ENCODE measurements at regions of chr19 and their contacts with region 1.

Region 1: GRCh38 chr19:17859533-17860330 is at the start of gene RPL18A:
- DNase-seq: peak; percentile 91 to 99 (median 98)
- ATAC-seq: peak; percentile 94 to 95
- H3K4me3 Mint-ChIP-seq: peak within 1 kb of the TSS; percentile 91 to 100 (median 99)
- H3K27ac Mint-ChIP-seq: peak within 1 kb of the TSS; percentile 95 to 100 (median 98)
- H3K4me1 Mint-ChIP-seq: peaks cover 19 to 42% (median 39%) of the 10 kb centered on the region in 4 donors
- H3K27me3 Mint-ChIP-seq: peaks cover 0 to 1% (median 0%) of the 10 kb centered on the region in 5 donors
- polyA plus RNA-seq, gene RPL18A: 3,790 to 4,859 (median 4,546) TPM

Region 2: DNA sequence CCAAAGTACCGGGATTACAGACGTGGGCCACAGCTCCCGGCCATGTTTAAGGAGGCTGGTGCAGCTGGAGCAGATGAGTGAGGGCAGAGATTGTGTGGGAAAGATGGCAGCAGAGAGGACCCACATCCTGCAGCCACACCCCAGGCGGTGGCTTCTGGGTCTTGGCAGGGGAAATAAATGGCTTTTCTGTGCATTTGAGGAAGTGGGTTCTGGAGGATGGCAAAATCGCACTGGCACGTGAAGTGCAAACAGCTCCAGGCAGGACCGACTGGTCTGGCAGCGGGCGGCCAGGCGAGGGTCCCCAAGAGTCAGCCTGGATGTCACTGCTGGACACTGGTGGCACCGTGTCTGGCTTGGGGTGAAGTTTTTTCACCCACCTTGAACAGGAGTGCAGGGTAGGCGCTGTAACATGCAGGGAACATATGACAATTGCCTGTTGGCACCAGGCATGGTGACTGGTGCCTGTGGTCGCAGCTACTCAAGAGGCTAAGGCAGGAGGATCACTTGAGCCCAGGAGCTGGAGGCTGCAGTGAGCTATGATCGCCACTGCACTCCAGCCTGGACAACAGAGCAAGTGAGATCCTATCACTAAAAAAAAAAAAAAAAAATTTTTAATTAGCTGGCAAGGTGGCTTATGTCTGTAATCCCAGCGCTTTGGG is 56.3 kb before region 1 on chr19:
- POLR2A ChIA-PET with region 1: interaction called, 21 read pairs
- DNase-seq: peak in 5 of 10 donors; percentile 19 to 64 (median 35)
- ATAC-seq: peak; percentile 70 to 82
- H3K4me3 Mint-ChIP-seq: peak overlapping the region; percentile 74 to 89 (median 78)
- H3K27ac Mint-ChIP-seq: peak overlapping the region; percentile 78 to 95 (median 90)
- H3K4me1 Mint-ChIP-seq: peaks cover 23 to 55% (median 44%) of the 10 kb centered on the region in 4 donors
- H3K27me3 Mint-ChIP-seq: no peaks in the 10 kb centered on the region

Region 3: DNA sequence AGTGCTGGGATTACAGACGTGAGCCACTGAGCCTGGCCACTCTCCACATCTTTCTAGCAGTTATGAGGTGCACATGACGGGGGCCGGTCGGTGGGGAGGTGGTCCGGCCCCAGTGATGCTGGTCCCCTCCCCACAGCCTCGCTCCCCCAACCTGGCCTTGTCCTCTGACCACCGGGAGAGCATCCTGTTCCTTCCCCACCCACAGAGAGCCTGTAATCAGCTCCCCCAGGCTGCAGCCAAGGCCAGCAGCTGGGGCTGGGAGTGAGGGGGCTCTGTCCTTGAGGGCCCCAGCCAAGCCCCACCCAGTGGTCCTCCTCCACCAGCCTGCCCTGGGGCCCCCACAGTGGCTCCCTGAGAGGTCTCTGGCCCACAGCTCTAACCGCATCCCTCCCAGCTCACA is 35.4 kb before region 1 on chr19:
- POLR2A ChIA-PET with region 1: no interaction called
- DNase-seq: no peak
- ATAC-seq: no peak
- H3K4me3 Mint-ChIP-seq: no peak overlapping the region
- H3K27ac Mint-ChIP-seq: peak overlapping the region in 6 of 10 donors; percentile 53 to 82 (median 76)
- H3K4me1 Mint-ChIP-seq: peaks cover 2 to 10% (median 4%) of the 10 kb centered on the region in 4 donors
- H3K27me3 Mint-ChIP-seq: no peaks in the 10 kb centered on the region

Region 4: GRCh38 chr19:17847538-17848366 is 12.0 kb before region 1 on chr19 and contains the start of gene JAK3:
- POLR2A ChIA-PET with region 1: interaction called, 33 read pairs
- DNase-seq: peak; percentile 70 to 90 (median 84)
- ATAC-seq: peak; percentile 81 to 88
- H3K4me3 Mint-ChIP-seq: peak within 1 kb of the TSS; percentile 78 to 98 (median 94)
- H3K27ac Mint-ChIP-seq: peak within 1 kb of the TSS; percentile 92 to 99 (median 97)
- H3K4me1 Mint-ChIP-seq: peaks cover 26 to 77% (median 75%) of the 10 kb centered on the region in 4 donors
- H3K27me3 Mint-ChIP-seq: no peaks in the 10 kb centered on the region
- polyA plus RNA-seq, gene JAK3: 78.7 to 122 (median 109) TPM

Region 5: GRCh38 chr19:17873786-17874757 is 14.3 kb after region 1 on chr19:
- POLR2A ChIA-PET with region 1: interaction called, 48 read pairs
- DNase-seq: peak; percentile 49 to 83 (median 68)
- ATAC-seq: peak; percentile 74 to 81
- H3K4me3 Mint-ChIP-seq: peak overlapping the region; percentile 69 to 89 (median 80)
- H3K27ac Mint-ChIP-seq: peak overlapping the region in 8 of 10 donors; percentile 25 to 92 (median 76)
- H3K4me1 Mint-ChIP-seq: peaks cover 2 to 30% (median 17%) of the 10 kb centered on the region in 4 donors
- H3K27me3 Mint-ChIP-seq: peaks cover 0 to 2% (median 0%) of the 10 kb centered on the region in 5 donors

Region 6: DNA sequence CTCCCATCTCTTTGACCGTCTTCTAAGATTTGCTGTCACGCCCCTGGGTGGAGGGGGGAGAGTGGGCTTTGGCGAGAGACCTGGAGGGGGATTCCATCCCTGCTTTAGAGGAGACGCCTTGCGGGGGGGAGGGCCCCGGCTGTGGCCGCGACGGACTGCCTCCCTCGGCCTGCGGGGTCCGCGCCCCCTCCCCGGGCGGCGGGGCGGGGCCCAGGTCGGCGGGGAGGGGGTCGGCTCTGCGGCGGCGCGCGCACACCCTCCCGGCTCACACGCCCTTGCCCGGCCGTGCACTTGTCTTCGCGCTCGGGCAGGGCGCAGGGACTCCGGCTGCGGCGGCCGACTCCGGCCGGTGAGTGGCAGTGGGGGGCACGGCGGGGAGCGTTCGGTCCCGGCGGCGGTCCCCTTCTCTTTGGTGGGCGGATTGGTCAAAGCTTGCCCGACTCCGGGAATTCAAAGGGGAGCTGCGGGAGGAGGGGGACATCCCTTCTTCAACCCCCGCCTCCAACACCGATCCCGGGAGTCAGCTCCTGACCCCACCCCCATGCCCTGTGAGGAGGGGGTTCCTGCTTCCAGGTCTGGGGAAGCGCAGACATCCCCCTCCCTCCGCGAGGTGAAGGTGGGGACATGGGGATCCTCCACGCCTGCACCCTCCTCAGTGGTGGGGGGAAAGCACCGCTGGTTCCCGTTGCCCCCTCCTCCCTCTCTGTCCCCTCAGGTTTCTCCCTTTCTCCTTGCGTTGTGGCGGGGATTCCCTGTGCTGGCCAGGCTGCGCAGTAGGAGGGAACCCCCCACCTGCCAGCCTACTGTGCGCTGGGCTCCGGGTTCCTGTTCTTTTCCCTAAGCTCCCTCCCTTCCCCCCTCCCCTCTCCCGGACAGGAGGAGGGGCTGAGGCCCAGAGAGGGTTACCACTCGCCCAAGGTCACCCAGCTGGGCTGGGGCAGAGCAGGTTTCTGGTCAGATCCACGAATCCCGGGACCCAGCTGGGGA is 92.6 kb after region 1 on chr19:
- POLR2A ChIA-PET with region 1: no interaction called
- DNase-seq: no peak
- ATAC-seq: no peak
- H3K4me3 Mint-ChIP-seq: peak overlapping the region; percentile 15 to 91 (median 42)
- H3K27ac Mint-ChIP-seq: peak overlapping the region in 1 of 10 donors; percentile 15
- H3K4me1 Mint-ChIP-seq: peaks cover 25 to 50% (median 44%) of the 10 kb centered on the region in 4 donors
- H3K27me3 Mint-ChIP-seq: peaks cover 15 to 69% (median 39%) of the 10 kb centered on the region in 5 donors

Measured in naive thymus-derived CD8-positive, alpha-beta T cell (primary cell).